IMR-90 (cell line): ENCODE measurements at regions of chr3 and their contacts with region 1.

Region 1: GRCh38 chr3:119955972-119956371 is 138.3 kb downstream of the GSK3B start:
- DNase-seq: no peak
- ATAC-seq: no peak
- H3K4me3 ChIP-seq: no peak overlapping the region
- H3K27ac ChIP-seq: no peak overlapping the region
- H3K4me1 ChIP-seq: peaks cover 1% of the 10 kb centered on the region; the same call in 1 of the 2 replicates
- H3K27me3 ChIP-seq: no peaks in the 10 kb centered on the region
- CTCF ChIP-seq: no peak
- POLR2A ChIP-seq: no peak
- RAD21 ChIP-seq: no peak

Region 2: GRCh38 chr3:119944091-119944490 is 11.9 kb before region 1 on chr3:
- CTCF ChIA-PET with region 1: interaction called, 12 read pairs
- POLR2A ChIA-PET with region 1: no interaction called
- dilution Hi-C with region 1: no loop called
- in situ Hi-C with region 1: no loop called
- intact Hi-C with region 1: no loop called
- DNase-seq: no peak
- ATAC-seq: no peak
- H3K4me3 ChIP-seq: no peak overlapping the region
- H3K27ac ChIP-seq: no peak overlapping the region
- H3K4me1 ChIP-seq: no peaks in the 10 kb centered on the region
- H3K27me3 ChIP-seq: no peaks in the 10 kb centered on the region
- CTCF ChIP-seq: no peak
- POLR2A ChIP-seq: no peak
- RAD21 ChIP-seq: no peak